ENCODE measurements at regions of chr1 and their contacts with region 1.

Region 1: GRCh38 chr1:119327436-119328155 is 41.0 kb upstream of the HAO2 start:
- DNase-seq: peak in 1 of 2 experiments; percentile 81
- H3K4me3 ChIP-seq: peak overlapping the region; percentile 21 to 57 (median 38); a peak in 6 of 8 replicates
- H3K27ac ChIP-seq: no peak overlapping the region
- H3K4me1 ChIP-seq: peaks cover 16 to 38% (median 28%) of the 10 kb centered on the region in 4 experiments
- H3K27me3 ChIP-seq: no peaks in the 10 kb centered on the region; a peak in 4 of 7 replicates
- CTCF ChIP-seq: peak; percentile 54 to 87 (median 76)
- EP300 ChIP-seq: no peak
- POLR2A ChIP-seq: no peak
- RAD21 ChIP-seq: peak in 1 of 2 experiments; percentile 5; a peak in 1 of 4 replicates

Region 2: DNA sequence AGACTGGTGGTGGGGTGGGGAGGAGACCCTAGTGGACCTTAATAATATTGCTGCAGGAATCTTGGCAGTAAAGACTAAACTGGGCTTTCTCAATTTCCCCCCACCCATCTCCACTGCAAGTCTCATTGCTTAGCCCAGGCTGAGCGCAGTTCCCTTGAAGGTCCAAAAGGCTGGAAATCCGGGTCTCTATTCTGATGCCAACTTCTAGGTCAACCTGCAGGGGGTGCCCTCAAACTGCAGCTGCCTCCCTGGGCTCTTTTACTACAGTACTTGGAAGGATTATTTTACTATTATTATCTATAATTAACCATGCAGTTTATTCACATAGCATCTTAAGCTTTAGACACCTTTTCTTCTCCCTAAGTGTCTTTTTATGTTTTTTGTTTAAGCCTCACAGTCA is 101.8 kb before region 1 on chr1:
- CTCF ChIA-PET with region 1: no interaction called
- POLR2A ChIA-PET with region 1: no interaction called
- DNase-seq: no peak
- H3K4me3 ChIP-seq: no peak overlapping the region
- H3K27ac ChIP-seq: no peak overlapping the region
- H3K4me1 ChIP-seq: peaks cover 0 to 4% (median 2%) of the 10 kb centered on the region in 4 experiments; a peak in 3 of 7 replicates
- H3K27me3 ChIP-seq: no peaks in the 10 kb centered on the region
- CTCF ChIP-seq: peak; percentile 46 to 67 (median 48)
- EP300 ChIP-seq: no peak
- POLR2A ChIP-seq: no peak
- RAD21 ChIP-seq: peak; percentile 53 to 58

Region 3: GRCh38 chr1:119298687-119299303 is 28.8 kb before region 1 on chr1:
- CTCF ChIA-PET with region 1: interaction called, 12 read pairs
- POLR2A ChIA-PET with region 1: interaction called, 3 read pairs
- DNase-seq: no peak
- H3K4me3 ChIP-seq: no peak overlapping the region
- H3K27ac ChIP-seq: no peak overlapping the region
- H3K4me1 ChIP-seq: peaks cover 2 to 10% (median 6%) of the 10 kb centered on the region in 4 experiments; a peak in 6 of 7 replicates
- H3K27me3 ChIP-seq: peaks cover 0 to 2% (median 0%) of the 10 kb centered on the region in 4 experiments; a peak in 1 of 7 replicates
- CTCF ChIP-seq: no peak
- EP300 ChIP-seq: no peak
- POLR2A ChIP-seq: no peak
- RAD21 ChIP-seq: no peak

Region 4: DNA sequence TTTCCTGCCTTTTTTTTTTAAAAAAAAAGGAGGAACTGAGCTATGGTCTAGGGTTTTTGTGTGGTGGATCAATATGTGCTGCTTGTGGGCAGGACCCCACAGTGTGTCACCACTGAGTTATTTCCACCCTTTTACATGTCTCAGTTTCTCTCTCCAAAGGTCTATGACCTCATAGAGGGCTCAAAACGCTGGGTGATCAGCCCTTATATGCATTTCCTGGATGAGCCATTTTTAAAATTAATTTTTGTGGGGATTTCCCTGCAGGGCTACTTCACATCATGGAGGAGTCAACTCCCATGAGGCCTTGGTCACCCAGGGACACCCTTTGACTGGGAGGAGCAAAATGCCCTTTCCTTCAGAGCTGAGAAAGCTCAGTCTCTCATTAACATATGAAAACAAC is 20.3 kb after region 1 on chr1:
- CTCF ChIA-PET with region 1: interaction called, 17 read pairs
- POLR2A ChIA-PET with region 1: no interaction called
- DNase-seq: no peak
- H3K4me3 ChIP-seq: no peak overlapping the region
- H3K27ac ChIP-seq: no peak overlapping the region
- H3K4me1 ChIP-seq: peaks cover 0 to 4% (median 2%) of the 10 kb centered on the region in 4 experiments; a peak in 2 of 7 replicates
- H3K27me3 ChIP-seq: no peaks in the 10 kb centered on the region
- CTCF ChIP-seq: no peak
- EP300 ChIP-seq: no peak
- POLR2A ChIP-seq: no peak
- RAD21 ChIP-seq: no peak

Region 5: GRCh38 chr1:119394085-119394484 is 66.5 kb after region 1 on chr1:
- CTCF ChIA-PET with region 1: no interaction called
- POLR2A ChIA-PET with region 1: no interaction called
- DNase-seq: no peak
- H3K4me3 ChIP-seq: no peak overlapping the region
- H3K27ac ChIP-seq: no peak overlapping the region
- H3K4me1 ChIP-seq: no peaks in the 10 kb centered on the region
- H3K27me3 ChIP-seq: no peaks in the 10 kb centered on the region
- CTCF ChIP-seq: no peak
- EP300 ChIP-seq: no peak
- POLR2A ChIP-seq: no peak
- RAD21 ChIP-seq: no peak

Region 6: DNA sequence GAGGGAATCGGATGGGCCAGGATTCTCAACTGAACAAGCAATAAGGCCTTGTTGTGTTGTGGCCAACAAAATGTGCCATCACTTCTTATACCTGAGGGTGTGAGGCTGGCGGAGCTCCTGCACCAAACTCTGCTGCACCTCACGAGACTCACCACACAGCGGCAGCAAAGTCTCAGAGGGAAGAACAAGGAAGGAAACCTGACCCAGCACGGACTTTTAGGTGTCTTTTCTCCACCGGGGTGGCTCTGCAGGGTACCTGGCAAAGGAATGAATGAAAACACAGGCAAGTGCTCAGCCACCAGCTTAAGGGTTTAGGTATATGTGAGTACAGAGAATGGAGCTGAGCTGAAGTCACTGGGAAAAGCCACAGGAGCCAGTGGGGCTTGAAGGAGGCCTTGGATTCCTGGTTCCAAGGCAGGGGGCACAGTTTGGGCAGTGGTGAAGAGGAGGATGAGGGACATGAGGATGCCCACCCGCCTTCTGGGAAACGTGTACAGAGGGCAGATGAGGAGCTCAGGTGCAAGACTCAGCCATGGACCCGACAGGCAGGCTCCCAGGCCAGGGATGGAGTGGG is 148.4 kb after region 1 on chr1:
- CTCF ChIA-PET with region 1: no interaction called
- POLR2A ChIA-PET with region 1: no interaction called
- DNase-seq: peak; percentile 46 to 85
- H3K4me3 ChIP-seq: no peak overlapping the region
- H3K27ac ChIP-seq: no peak overlapping the region
- H3K4me1 ChIP-seq: peaks cover 0 to 3% (median 3%) of the 10 kb centered on the region in 4 experiments; a peak in 4 of 7 replicates
- H3K27me3 ChIP-seq: peaks cover 0 to 2% (median 0%) of the 10 kb centered on the region in 4 experiments; a peak in 1 of 7 replicates
- CTCF ChIP-seq: peak; percentile 86 to 96 (median 93)
- EP300 ChIP-seq: no peak
- POLR2A ChIP-seq: no peak
- RAD21 ChIP-seq: peak; percentile 89 to 92

Region 7: DNA sequence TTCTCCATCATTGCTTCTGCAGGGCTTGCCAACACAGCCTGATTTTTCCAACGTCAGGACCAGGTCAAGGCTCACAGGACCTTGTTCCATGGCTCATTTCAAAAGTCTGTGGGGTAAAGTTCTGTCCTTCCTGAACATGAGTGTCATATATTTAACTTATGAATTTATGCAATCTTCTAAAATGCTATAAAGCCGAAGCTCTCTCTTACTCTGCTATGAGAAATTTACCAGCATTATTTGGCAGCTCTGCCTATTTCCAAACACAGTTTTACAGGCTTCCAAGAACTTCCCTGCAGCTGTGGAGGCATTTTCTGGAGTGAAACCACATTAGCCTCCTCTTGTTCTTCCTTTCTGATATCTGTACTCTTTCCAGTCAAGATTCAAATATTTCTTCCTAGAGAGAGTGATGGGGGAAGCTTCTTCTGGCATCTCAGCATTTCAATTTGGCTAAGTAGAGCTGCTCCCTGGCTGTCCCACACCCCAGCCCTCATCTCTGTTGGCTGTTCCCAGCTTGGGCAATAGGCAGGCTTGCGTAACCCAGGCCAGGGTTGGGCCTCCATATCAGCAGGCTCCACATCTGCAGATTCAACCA is 456.7 kb after region 1 on chr1:
- CTCF ChIA-PET with region 1: no interaction called
- POLR2A ChIA-PET with region 1: no interaction called
- DNase-seq: no peak
- H3K4me3 ChIP-seq: no peak overlapping the region
- H3K27ac ChIP-seq: no peak overlapping the region
- H3K4me1 ChIP-seq: no peaks in the 10 kb centered on the region
- H3K27me3 ChIP-seq: no peaks in the 10 kb centered on the region
- CTCF ChIP-seq: no peak
- EP300 ChIP-seq: no peak
- POLR2A ChIP-seq: no peak
- RAD21 ChIP-seq: no peak

Measured in H1 (cell line).